ENCODE measurements at regions of chr7 and their contacts with region 1.

Region 1: DNA sequence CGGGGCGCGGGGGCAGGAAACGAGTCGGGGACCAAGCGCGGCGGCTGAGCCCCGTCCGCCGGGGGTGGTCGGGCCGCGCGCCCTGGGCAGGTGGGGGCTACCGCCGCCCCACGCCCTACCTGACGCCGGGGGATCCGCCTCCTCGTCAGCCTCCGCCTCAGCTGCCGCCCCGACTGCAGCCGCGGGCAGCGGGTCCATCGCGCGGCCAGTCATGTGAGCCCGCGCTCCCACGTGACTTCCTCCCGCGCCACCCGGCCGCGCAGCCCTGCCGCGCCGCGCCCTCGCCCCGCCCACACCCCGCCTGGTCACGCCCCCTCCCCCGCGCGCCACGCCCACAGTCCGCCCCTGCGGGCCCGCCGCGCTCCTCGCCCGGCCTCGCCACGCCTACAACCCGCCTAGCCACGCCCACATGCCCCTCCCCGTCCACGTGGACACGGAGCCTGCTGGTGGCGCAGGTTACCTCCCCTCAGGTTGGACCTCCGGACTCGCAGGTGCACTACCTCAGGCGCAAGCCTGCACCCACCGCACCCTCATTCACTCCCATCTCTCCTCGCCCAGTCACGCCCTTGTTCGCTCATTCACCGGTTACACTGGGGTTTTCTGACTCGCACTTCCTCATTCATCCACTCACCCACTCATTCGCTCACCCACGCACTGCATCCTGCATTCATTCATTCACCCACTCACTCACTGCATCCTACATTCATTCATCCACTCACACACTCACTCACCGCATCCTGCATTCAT is at the start of gene SNX8:
- DNase-seq: peak; percentile 93 to 99 (median 95)
- ATAC-seq: peak; percentile 88
- H3K4me3 ChIP-seq: peak within 1 kb of the TSS; percentile 75 to 76
- H3K4me3 Mint-ChIP-seq: no peak within 1 kb of the TSS
- H3K27ac ChIP-seq: peak within 1 kb of the TSS; percentile 43 to 54
- H3K27ac Mint-ChIP-seq: peak within 1 kb of the TSS; percentile 87
- H3K4me1 ChIP-seq: peaks cover 5% of the 10 kb centered on the region
- H3K4me1 Mint-ChIP-seq: peaks cover 8% of the 10 kb centered on the region
- H3K27me3 ChIP-seq: no peaks in the 10 kb centered on the region
- H3K27me3 Mint-ChIP-seq: no peaks in the 10 kb centered on the region
- CTCF ChIP-seq: no peak
- total RNA-seq, gene SNX8: 4.0 to 6.1 TPM

Region 2: DNA sequence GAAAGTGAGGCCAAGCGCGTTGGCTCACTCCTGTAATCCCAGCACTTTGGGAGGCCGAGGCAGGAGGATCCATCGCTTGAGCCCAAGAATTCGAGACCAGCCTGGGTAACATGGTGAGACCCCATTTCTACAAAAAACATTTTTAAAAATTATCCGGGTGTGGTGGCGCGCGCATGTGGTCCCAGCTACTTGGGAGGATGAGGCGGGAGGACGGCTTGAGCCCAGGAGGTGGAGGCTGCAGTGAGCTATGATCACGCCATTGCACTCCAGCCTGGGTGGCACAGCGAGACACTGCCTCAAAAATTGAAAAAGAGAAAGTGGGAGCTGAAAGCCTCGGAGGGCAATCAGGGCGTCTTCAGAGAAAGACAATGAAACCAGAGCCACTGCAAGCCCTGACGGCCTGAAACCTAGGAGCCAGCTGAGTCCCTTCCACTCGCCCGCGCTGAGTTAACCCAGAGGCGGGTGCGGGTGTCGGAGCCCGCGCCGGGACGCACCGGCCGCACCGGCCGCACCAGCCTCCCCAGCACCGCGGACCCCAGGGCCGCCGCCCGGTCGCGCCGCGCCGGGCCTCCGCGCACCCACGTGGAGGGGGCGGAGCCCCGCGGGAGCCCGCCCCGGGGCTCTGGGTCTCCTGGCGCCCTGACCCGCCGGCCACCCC is 1176.7 kb before region 1 on chr7:
- CTCF ChIA-PET with region 1: no interaction called
- POLR2A ChIA-PET with region 1: no interaction called
- intact Hi-C with region 1: loop called in 1 of 2 experiments (anchors 5 kb)
- DNase-seq: no peak
- ATAC-seq: peak; percentile 62
- H3K4me3 ChIP-seq: peak overlapping the region; percentile 77 to 78
- H3K4me3 Mint-ChIP-seq: peak overlapping the region; percentile 90
- H3K27ac ChIP-seq: peak overlapping the region; percentile 81 to 91
- H3K27ac Mint-ChIP-seq: peak overlapping the region; percentile 88
- H3K4me1 ChIP-seq: peaks cover 14% of the 10 kb centered on the region
- H3K4me1 Mint-ChIP-seq: peaks cover 17% of the 10 kb centered on the region
- H3K27me3 ChIP-seq: no peaks in the 10 kb centered on the region
- H3K27me3 Mint-ChIP-seq: no peaks in the 10 kb centered on the region
- CTCF ChIP-seq: no peak

Region 3: GRCh38 chr7:1569833-1570633 is 744.3 kb before region 1 on chr7 and contains the start of gene PSMG3:
- CTCF ChIA-PET with region 1: no interaction called
- POLR2A ChIA-PET with region 1: no interaction called
- intact Hi-C with region 1: loop called in 1 of 2 experiments (anchors 1 kb)
- DNase-seq: peak; percentile 77 to 93 (median 88)
- ATAC-seq: peak; percentile 87
- H3K4me3 ChIP-seq: peak within 1 kb of the TSS; percentile 64 to 95
- H3K4me3 Mint-ChIP-seq: peak within 1 kb of the TSS; percentile 87
- H3K27ac ChIP-seq: peak within 1 kb of the TSS; percentile 69 to 90
- H3K27ac Mint-ChIP-seq: peak within 1 kb of the TSS; percentile 91
- H3K4me1 ChIP-seq: peaks cover 16% of the 10 kb centered on the region
- H3K4me1 Mint-ChIP-seq: peaks cover 29% of the 10 kb centered on the region
- H3K27me3 ChIP-seq: no peaks in the 10 kb centered on the region
- H3K27me3 Mint-ChIP-seq: no peaks in the 10 kb centered on the region
- CTCF ChIP-seq: no peak
- total RNA-seq, gene PSMG3: 20.9 to 21.0 TPM

Region 4: GRCh38 chr7:2232766-2233520 is 81.4 kb before region 1 on chr7 and contains the start of gene MAD1L1:
- CTCF ChIA-PET with region 1: no interaction called
- POLR2A ChIA-PET with region 1: no interaction called
- intact Hi-C with region 1: loop called (anchors 1 to 5 kb)
- DNase-seq: peak; percentile 77 to 93 (median 88)
- ATAC-seq: peak; percentile 93
- H3K4me3 ChIP-seq: peak within 1 kb of the TSS; percentile 63 to 96
- H3K4me3 Mint-ChIP-seq: peak within 1 kb of the TSS; percentile 94
- H3K27ac ChIP-seq: peak within 1 kb of the TSS; percentile 33 to 61
- H3K27ac Mint-ChIP-seq: peak within 1 kb of the TSS; percentile 83
- H3K4me1 ChIP-seq: peaks cover 24% of the 10 kb centered on the region
- H3K4me1 Mint-ChIP-seq: peaks cover 34% of the 10 kb centered on the region
- H3K27me3 ChIP-seq: no peaks in the 10 kb centered on the region
- H3K27me3 Mint-ChIP-seq: no peaks in the 10 kb centered on the region
- CTCF ChIP-seq: no peak
- total RNA-seq, gene MAD1L1: 88.7 to 91.0 TPM

Region 5: DNA sequence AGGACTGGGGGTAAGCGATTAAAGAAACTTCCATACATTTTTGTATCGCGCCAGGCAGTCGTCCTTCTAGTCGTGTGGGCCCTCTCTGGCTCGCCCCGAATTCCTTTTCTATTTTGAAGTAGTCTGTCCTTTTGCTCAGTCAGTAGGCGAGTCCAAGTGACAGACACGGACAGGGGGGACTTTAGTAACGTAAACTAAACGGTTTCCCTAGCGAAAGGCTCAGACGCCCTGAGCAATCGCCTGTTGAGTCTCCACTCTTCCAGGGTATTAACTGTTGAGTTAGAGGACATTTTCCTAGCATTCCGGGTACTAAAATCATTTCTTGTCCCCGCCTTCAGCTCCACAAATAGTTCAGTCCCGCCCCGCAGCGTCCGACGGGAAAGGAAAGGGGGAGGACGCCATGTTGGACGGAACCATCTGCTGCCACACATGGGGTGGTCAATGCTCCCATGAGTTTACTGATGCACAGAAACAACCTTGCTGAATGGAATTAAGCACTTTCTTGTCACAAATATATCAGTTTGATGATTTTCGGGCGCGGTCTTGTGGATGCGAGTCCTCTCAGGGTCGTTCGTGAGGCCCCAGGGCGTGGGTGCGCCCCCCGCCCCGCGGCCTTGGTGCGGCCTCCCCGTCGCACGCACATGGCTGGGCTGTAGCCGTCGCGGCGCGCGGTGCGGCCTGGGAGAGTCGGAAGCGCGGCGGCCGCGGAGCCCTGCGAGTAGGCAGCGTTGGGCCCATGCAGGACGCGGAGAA is 40.0 kb after region 1 on chr7 and contains the start of gene EIF3B:
- CTCF ChIA-PET with region 1: no interaction called
- POLR2A ChIA-PET with region 1: interaction called, 4 read pairs
- intact Hi-C with region 1: loop called (anchors 1 kb)
- DNase-seq: peak; percentile 80 to 97 (median 90)
- ATAC-seq: peak; percentile 84
- H3K4me3 ChIP-seq: peak within 1 kb of the TSS; percentile 72 to 74
- H3K4me3 Mint-ChIP-seq: peak within 1 kb of the TSS; percentile 88
- H3K27ac ChIP-seq: peak within 1 kb of the TSS; percentile 99
- H3K27ac Mint-ChIP-seq: peak within 1 kb of the TSS; percentile 99
- H3K4me1 ChIP-seq: peaks cover 45% of the 10 kb centered on the region
- H3K4me1 Mint-ChIP-seq: peaks cover 40% of the 10 kb centered on the region
- H3K27me3 ChIP-seq: no peaks in the 10 kb centered on the region
- H3K27me3 Mint-ChIP-seq: no peaks in the 10 kb centered on the region
- CTCF ChIP-seq: no peak
- total RNA-seq, gene EIF3B: 234 to 239 TPM

Region 6: GRCh38 chr7:2508327-2509215 is 194.2 kb after region 1 on chr7:
- CTCF ChIA-PET with region 1: no interaction called
- POLR2A ChIA-PET with region 1: no interaction called
- intact Hi-C with region 1: loop called in 1 of 2 experiments (anchors 5 kb)
- DNase-seq: peak; percentile 56 to 95 (median 84)
- ATAC-seq: peak; percentile 67
- H3K4me3 ChIP-seq: peak overlapping the region; percentile 27 to 47
- H3K4me3 Mint-ChIP-seq: peak overlapping the region; percentile 74
- H3K27ac ChIP-seq: peak overlapping the region; percentile 84 to 88
- H3K27ac Mint-ChIP-seq: peak overlapping the region; percentile 97
- H3K4me1 ChIP-seq: peaks cover 67% of the 10 kb centered on the region
- H3K4me1 Mint-ChIP-seq: peaks cover 64% of the 10 kb centered on the region
- H3K27me3 ChIP-seq: no peaks in the 10 kb centered on the region
- H3K27me3 Mint-ChIP-seq: no peaks in the 10 kb centered on the region
- CTCF ChIP-seq: no peak

Region 7: GRCh38 chr7:2621061-2621828 is 306.9 kb after region 1 on chr7:
- CTCF ChIA-PET with region 1: no interaction called
- POLR2A ChIA-PET with region 1: no interaction called
- intact Hi-C with region 1: no loop called
- DNase-seq: no peak
- ATAC-seq: no peak
- H3K4me3 ChIP-seq: no peak overlapping the region
- H3K4me3 Mint-ChIP-seq: no peak overlapping the region
- H3K27ac ChIP-seq: no peak overlapping the region
- H3K27ac Mint-ChIP-seq: no peak overlapping the region
- H3K4me1 ChIP-seq: no peaks in the 10 kb centered on the region
- H3K4me1 Mint-ChIP-seq: no peaks in the 10 kb centered on the region
- H3K27me3 ChIP-seq: no peaks in the 10 kb centered on the region
- H3K27me3 Mint-ChIP-seq: no peaks in the 10 kb centered on the region
- CTCF ChIP-seq: no peak

Region 8: DNA sequence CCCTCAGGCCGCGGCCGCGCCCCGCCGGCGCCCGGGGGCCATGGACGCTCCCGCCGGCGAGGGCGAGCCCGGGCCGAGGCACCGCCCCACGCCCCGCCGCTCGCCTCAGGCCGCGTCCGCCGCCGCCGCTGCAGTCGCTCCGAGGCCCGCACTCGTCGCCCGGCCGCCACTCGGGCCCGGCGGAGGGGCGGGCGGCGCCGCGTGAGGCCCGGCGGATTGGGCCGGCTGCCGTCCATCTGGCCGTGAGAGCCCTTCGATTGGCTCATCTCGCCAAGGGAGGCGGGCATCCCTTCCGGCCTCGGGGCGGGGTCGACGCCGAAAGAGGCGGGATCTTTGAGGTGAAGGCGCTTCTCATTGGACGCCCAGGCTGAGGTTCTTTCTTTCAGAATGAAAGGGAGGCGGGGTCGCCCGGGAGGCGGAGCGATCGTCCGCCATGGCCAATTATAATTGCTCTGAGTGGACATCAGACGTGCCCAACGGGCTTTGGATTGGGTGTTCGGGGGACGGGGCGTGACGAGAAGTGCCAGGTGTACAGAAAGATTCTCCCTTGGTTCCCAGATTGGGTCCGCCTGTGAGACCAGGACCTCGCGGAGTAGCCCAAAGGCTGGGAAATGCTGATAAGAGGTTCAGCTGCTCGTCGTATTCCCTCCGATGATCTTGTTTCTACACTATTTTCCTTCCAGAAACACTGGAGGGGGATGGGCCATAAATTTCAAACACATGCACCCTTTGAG is 530.0 kb after region 1 on chr7 and contains the start of gene GNA12:
- CTCF ChIA-PET with region 1: no interaction called
- POLR2A ChIA-PET with region 1: no interaction called
- intact Hi-C with region 1: loop called in 1 of 2 experiments (anchors 5 kb)
- DNase-seq: peak; percentile 96 to 99 (median 98)
- ATAC-seq: peak; percentile 94
- H3K4me3 ChIP-seq: peak within 1 kb of the TSS; percentile 51 to 58
- H3K4me3 Mint-ChIP-seq: peak within 1 kb of the TSS; percentile 93
- H3K27ac ChIP-seq: peak within 1 kb of the TSS in 1 of 2 experiments; percentile 22
- H3K27ac Mint-ChIP-seq: peak within 1 kb of the TSS; percentile 81
- H3K4me1 ChIP-seq: peaks cover 21% of the 10 kb centered on the region
- H3K4me1 Mint-ChIP-seq: peaks cover 44% of the 10 kb centered on the region
- H3K27me3 ChIP-seq: no peaks in the 10 kb centered on the region
- H3K27me3 Mint-ChIP-seq: no peaks in the 10 kb centered on the region
- CTCF ChIP-seq: no peak
- total RNA-seq, gene GNA12: 17.0 to 17.7 TPM

Measured in CD8-positive, alpha-beta T cell (primary cell).